ENCODE measurements at regions of chr7 and their contacts with region 1.

Region 1: DNA sequence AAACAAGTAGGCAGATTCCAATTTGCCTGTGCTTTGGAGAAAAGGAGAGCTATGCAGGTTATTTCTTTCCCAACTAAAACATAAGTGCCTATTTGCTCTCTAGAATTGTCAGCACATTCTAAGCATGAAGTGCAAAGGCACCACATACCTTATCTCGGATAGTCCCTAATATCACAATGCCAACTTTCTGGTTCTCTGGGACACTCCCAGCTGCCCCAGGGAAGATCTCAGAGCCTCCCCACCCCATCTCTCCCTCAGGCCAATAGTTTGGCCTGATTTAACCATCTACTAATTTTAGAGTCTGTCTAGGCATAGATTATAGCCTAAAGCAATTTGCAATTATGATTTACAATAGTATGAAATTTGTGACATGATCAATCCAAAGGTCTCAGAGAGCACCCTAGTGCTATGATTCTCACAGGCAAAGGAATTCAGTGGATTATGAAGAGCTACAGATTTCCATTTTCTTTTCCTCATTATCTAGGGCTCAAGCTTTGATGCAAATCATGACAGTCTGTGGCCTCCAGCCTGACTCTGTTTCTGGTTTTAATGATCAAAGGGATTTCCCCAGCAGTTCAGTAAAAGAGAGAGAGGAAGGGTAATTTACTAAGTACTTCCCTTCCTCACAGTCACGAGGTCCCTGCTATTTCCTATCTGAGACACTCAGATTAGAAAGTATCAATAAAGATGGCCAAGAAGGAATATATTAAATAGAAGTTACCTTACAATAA is 29.0 kb upstream of the IL6 start:
- DNase-seq: peak in 4 of 9 donors; percentile 10 to 25 (median 16)
- ATAC-seq: peak; percentile 79
- H3K4me3 ChIP-seq: no peak overlapping the region
- H3K4me3 Mint-ChIP-seq: peak overlapping the region in 3 of 10 donors; percentile 0 to 69 (median 31)
- H3K27ac ChIP-seq: no peak overlapping the region
- H3K27ac Mint-ChIP-seq: peak overlapping the region in 2 of 9 donors; percentile 23 to 73
- H3K4me1 ChIP-seq: peaks cover 3 to 31% of the 10 kb centered on the region in 2 donors
- H3K4me1 Mint-ChIP-seq: peaks cover 32 to 77% (median 46%) of the 10 kb centered on the region in 7 donors
- H3K27me3 ChIP-seq: no peaks in the 10 kb centered on the region
- H3K27me3 Mint-ChIP-seq: peaks cover 0 to 19% (median 0%) of the 10 kb centered on the region in 5 donors

Region 2: DNA sequence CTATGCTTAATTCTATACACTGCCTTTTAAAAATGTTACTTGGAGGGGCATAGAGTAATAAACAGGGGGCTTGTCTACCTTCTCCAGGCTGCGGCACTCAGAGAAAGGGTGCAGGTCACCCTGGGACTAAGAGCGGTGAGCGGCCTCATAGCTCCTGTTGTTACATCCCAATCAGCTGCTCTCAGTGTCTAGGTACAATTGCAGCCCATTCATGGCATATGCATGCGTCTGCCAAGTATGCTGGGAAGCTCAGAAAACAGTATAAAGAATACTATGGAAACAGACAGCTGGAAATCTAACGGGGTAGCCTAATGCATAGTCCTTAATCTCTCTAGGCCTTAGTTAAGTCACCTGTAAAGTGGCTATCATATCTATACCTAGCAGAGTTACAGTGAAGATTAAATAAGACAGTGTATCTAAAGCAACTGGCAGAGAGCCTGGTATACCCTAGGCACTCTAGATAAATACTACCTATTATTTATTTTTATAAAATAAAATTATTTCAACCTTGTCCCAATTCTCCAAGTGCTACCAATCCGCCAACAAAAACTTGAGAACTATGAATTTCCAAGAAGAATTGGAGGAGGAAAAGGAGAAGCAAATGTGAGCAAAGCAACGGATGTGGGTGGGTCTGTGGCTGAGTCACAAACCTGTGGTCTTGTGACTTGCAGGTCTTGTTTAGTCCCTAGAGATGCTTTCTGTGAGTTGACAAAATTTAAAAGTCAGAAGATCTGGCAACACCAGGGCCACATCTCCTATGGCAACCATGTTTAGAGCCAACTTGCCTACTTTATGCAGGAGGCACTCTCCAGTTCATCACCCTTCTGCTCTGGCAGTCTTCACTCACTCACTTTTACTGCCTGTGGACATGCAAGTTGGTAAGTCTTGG is 524.1 kb before region 1 on chr7:
- CTCF ChIA-PET with region 1: no interaction called
- POLR2A ChIA-PET with region 1: no interaction called
- intact Hi-C with region 1: loop called in 1 of 2 experiments (anchors 5 kb)
- DNase-seq: peak in 5 of 9 donors; percentile 1 to 25 (median 5)
- ATAC-seq: peak; percentile 80
- H3K4me3 ChIP-seq: no peak overlapping the region
- H3K4me3 Mint-ChIP-seq: peak overlapping the region in 1 of 10 donors; percentile 67
- H3K27ac ChIP-seq: no peak overlapping the region
- H3K27ac Mint-ChIP-seq: peak overlapping the region in 2 of 9 donors; percentile 13 to 88
- H3K4me1 ChIP-seq: no peaks in the 10 kb centered on the region
- H3K4me1 Mint-ChIP-seq: peaks cover 0 to 19% (median 5%) of the 10 kb centered on the region in 7 donors
- H3K27me3 ChIP-seq: no peaks in the 10 kb centered on the region
- H3K27me3 Mint-ChIP-seq: peaks cover 4 to 17% (median 11%) of the 10 kb centered on the region in 5 donors

Region 3: DNA sequence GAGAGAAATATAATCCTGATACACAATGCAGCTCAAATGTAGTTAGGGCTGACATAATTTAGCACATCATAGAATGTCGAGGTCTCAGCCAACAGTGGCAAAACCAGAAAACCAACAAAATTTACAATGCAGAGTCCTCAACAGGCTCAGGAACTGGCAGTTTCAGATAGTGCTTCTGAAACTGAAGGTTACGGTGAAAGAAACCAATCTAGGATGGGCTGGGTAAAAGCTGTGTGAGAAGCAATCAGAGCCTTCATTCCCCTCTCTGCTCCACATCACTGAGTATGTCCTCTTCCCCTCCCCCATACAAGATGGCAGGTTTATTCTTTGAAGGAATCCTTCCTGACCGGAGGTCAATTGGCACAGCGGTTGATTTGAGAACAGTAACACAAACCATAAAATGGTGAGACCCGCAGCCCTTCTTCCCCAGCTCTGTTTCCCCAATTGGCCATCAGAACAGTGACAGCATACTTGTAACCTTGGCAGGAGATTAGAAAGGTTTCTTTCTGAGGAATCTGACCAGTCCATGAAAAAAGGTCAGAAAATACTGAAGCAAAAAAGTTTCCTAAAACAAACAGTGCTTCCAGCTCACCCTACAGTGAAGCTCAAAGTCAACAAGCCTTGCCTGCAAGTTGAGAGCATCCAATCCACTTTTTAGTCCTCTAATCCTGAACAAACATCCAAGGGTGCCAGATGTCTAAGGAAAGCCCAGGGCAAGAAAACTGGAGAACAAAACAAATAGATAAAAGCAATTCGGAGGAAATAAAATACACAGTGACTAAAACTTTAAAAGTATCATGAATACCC is 25.0 kb before region 1 on chr7:
- CTCF ChIA-PET with region 1: interaction called, 3 read pairs
- POLR2A ChIA-PET with region 1: interaction called, 4 read pairs
- intact Hi-C with region 1: loop called (anchors 1 to 2 kb)
- DNase-seq: no peak
- ATAC-seq: no peak
- H3K4me3 ChIP-seq: no peak overlapping the region
- H3K4me3 Mint-ChIP-seq: peak overlapping the region in 7 of 10 donors; percentile 7 to 68 (median 37)
- H3K27ac ChIP-seq: no peak overlapping the region
- H3K27ac Mint-ChIP-seq: peak overlapping the region; percentile 14 to 88 (median 78)
- H3K4me1 ChIP-seq: peaks cover 18 to 54% of the 10 kb centered on the region in 2 donors
- H3K4me1 Mint-ChIP-seq: peaks cover 43 to 68% (median 65%) of the 10 kb centered on the region in 7 donors
- H3K27me3 ChIP-seq: no peaks in the 10 kb centered on the region
- H3K27me3 Mint-ChIP-seq: peaks cover 0 to 13% (median 0%) of the 10 kb centered on the region in 5 donors